ENCODE measurements at regions of chr17 and their contacts with region 1.

Region 1: DNA sequence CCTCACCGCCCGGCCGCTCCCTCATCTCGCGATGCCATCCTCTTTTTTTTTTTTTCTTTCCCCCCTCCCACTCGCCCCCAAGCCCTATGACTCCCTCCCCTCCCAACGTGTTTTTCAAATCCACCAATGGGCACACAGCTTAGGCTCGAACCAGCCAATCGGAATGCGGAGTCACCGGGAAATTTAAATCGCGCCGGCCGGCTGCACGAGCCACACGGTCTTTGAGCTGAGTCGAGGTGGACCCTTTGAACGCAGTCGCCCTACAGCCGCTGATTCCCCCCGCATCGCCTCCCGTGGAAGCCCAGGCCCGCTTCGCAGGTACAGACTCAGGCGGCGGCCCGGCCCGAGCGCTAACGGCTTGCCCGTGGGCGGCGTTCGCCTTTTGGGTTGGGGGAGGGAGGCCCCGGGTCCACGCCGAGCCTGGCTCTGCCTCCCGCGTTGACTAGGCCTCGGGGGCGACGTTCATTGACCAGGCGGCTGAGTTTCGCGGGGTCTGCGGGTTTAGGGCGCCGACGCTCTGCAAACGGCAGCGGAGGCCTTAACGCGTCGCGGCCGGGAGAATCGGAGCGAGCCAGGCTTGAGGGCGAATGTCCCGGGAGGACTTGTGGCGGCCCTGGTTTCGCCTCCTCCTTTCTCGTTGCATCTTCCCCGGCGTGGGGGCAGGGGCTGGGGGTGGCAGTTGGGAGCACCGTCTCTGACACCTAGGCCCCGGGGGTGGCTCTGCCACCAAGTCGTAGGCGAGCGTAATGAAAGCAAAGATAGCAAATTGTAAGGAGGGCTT is at the start of gene KPNA2:
- DNase-seq: peak; percentile 93
- H3K4me3 Mint-ChIP-seq: peak within 1 kb of the TSS; percentile 96
- H3K27ac Mint-ChIP-seq: peak within 1 kb of the TSS; percentile 97
- H3K4me1 Mint-ChIP-seq: peaks cover 23% of the 10 kb centered on the region
- H3K27me3 Mint-ChIP-seq: no peaks in the 10 kb centered on the region
- total RNA-seq, gene KPNA2: 205 and 224 TPM in 2 replicates

Region 2: DNA sequence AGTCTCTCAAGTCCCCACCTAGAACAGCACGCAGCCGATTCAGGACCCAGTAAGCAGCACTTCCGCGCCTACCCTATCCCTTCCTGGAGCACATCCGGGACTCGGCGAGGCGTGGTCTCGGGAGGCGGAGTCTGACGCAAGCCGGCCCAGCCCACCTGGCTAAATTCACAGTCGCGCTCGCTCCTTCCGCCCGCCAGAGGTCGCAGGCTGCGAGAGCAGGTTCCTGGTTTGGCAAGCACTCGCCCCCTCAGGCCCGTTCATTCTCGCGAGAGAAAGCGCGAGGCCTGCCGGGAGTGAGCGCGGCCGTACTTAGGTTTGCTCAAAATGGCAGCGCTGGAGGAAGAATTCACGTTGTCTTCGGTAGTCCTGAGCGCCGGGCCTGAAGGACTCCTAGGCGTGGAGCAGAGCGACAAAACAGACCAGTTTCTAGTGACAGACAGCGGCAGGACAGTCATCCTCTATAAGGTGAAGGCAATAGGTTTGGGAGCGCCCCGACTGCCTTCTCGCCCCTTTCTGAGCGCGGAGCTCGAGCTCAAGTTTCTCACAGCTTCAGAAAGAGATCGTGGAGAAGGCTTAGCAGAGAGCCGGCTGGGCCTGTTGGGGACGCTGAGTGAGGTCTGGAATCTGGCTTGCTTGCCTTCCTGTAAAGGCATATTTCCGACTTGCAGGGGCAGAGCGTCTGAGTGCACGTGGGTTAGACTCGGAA is 317.9 kb before region 1 on chr17 and contains the start of gene NOL11:
- intact Hi-C with region 1: loop called (anchors 5 kb)
- DNase-seq: peak; percentile 99
- H3K4me3 Mint-ChIP-seq: peak within 1 kb of the TSS; percentile 99
- H3K27ac Mint-ChIP-seq: peak within 1 kb of the TSS; percentile 99
- H3K4me1 Mint-ChIP-seq: peaks cover 16% of the 10 kb centered on the region
- H3K27me3 Mint-ChIP-seq: peaks cover 4% of the 10 kb centered on the region
- total RNA-seq, gene NOL11: 107 and 118 TPM in 2 replicates

Region 3: GRCh38 chr17:68019675-68020408 is 15.9 kb before region 1 on chr17:
- intact Hi-C with region 1: loop called (anchors 1 kb)
- DNase-seq: peak; percentile 96
- H3K4me3 Mint-ChIP-seq: peak overlapping the region; percentile 87
- H3K27ac Mint-ChIP-seq: peak overlapping the region; percentile 98
- H3K4me1 Mint-ChIP-seq: peaks cover 21% of the 10 kb centered on the region
- H3K27me3 Mint-ChIP-seq: peaks cover 16% of the 10 kb centered on the region

Region 4: GRCh38 chr17:68089887-68090286 is 54.2 kb after region 1 on chr17:
- intact Hi-C with region 1: no loop called
- DNase-seq: no peak
- H3K4me3 Mint-ChIP-seq: no peak overlapping the region
- H3K27ac Mint-ChIP-seq: no peak overlapping the region
- H3K4me1 Mint-ChIP-seq: peaks cover 34% of the 10 kb centered on the region
- H3K27me3 Mint-ChIP-seq: peaks cover 5% of the 10 kb centered on the region

Region 5: GRCh38 chr17:68101075-68101992 is 65.6 kb after region 1 on chr17:
- intact Hi-C with region 1: loop called (anchors 5 kb)
- DNase-seq: peak; percentile 44
- H3K4me3 Mint-ChIP-seq: peak overlapping the region; percentile 88
- H3K27ac Mint-ChIP-seq: peak overlapping the region; percentile 72
- H3K4me1 Mint-ChIP-seq: peaks cover 22% of the 10 kb centered on the region
- H3K27me3 Mint-ChIP-seq: peaks cover 19% of the 10 kb centered on the region

Region 6: GRCh38 chr17:68184816-68185436 is 149.2 kb after region 1 on chr17:
- intact Hi-C with region 1: loop called (anchors 5 kb)
- DNase-seq: peak; percentile 70
- H3K4me3 Mint-ChIP-seq: peak overlapping the region; percentile 51
- H3K27ac Mint-ChIP-seq: peak overlapping the region; percentile 53
- H3K4me1 Mint-ChIP-seq: peaks cover 57% of the 10 kb centered on the region
- H3K27me3 Mint-ChIP-seq: peaks cover 10% of the 10 kb centered on the region

Region 7: DNA sequence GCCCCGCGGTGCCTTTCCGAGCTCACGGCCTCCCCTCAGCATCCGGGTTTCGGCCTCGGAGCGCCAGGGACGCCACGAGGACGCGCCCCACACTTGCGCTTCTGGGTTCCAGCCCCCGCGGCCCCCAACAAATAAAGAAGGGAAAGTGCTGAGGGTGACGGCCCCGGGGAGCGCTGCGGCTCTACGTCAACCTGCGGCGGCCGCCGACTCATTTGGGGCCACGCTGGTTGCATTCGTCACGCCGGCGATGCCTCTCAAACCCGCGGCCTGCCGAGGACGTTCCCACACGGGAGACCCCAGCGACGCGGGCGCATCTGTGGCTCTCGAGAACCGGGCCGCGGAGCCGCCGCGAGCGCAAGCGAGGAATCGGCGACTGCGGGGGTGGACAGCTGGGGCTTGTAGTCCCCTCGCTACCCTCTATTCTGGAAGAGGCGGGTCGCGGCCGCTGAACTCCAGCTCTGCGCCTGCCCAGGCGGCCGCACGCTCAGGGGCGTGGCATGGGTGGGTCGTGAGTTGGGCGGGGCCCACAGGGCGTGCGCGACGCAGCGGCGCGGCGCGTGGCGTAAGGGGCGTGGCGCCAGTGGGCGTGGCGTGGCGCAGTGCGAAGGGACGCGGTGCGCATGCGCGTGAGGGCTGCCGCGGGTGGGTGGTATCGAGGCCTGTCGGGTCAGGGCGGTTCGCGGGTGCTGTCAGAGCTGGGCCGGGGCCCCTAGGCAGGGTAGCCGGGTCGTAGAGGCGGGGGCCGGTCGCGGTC is 211.9 kb after region 1 on chr17 and contains the start of gene AMZ2:
- intact Hi-C with region 1: loop called (anchors 1 kb)
- DNase-seq: peak; percentile 98
- H3K4me3 Mint-ChIP-seq: peak within 1 kb of the TSS; percentile 88
- H3K27ac Mint-ChIP-seq: peak within 1 kb of the TSS; percentile 96
- H3K4me1 Mint-ChIP-seq: peaks cover 49% of the 10 kb centered on the region
- H3K27me3 Mint-ChIP-seq: no peaks in the 10 kb centered on the region
- total RNA-seq, gene AMZ2: 67.3 and 75.7 TPM in 2 replicates

Measured in activated T-helper 1 cell treated with anti-CD3 and anti-CD28 coated beads, Interleukin-12 subunit alpha, Interleukin-12 subunit beta, Interleukin-2, Interleukin-4 antibody, amounts not matched to agents 30 ng/mL and 10 ng/mL and 1 ng/mL, durations not matched to agents 14 hours and 24 hours and 36 hours (primary cell).